ENCODE measurements at regions of chr9 and their contacts with region 1.

Region 1: GRCh38 chr9:110452227-110452801 is 114.7 kb upstream of the TXNDC8 start:
- DNase-seq: no peak
- H3K4me3 ChIP-seq: no peak overlapping the region
- H3K27ac ChIP-seq: no peak overlapping the region
- H3K4me1 ChIP-seq: no peaks in the 10 kb centered on the region
- H3K27me3 ChIP-seq: no peaks in the 10 kb centered on the region
- CTCF ChIP-seq: peak; percentile 25 to 47

Region 2: GRCh38 chr9:110599164-110599867 is 147.0 kb after region 1 on chr9:
- intact Hi-C with region 1: loop called (anchors 10 kb)
- DNase-seq: no peak
- H3K4me3 ChIP-seq: no peak overlapping the region
- H3K27ac ChIP-seq: no peak overlapping the region
- H3K4me1 ChIP-seq: no peaks in the 10 kb centered on the region
- H3K27me3 ChIP-seq: peaks cover 0 to 2% of the 10 kb centered on the region in 2 donors
- CTCF ChIP-seq: no peak

Measured in tibial artery (tissue), 4 donors.